Transverse colon (tissue), 4 donors: ENCODE measurements at regions of chr6 and their contacts with region 1.

Region 1: DNA sequence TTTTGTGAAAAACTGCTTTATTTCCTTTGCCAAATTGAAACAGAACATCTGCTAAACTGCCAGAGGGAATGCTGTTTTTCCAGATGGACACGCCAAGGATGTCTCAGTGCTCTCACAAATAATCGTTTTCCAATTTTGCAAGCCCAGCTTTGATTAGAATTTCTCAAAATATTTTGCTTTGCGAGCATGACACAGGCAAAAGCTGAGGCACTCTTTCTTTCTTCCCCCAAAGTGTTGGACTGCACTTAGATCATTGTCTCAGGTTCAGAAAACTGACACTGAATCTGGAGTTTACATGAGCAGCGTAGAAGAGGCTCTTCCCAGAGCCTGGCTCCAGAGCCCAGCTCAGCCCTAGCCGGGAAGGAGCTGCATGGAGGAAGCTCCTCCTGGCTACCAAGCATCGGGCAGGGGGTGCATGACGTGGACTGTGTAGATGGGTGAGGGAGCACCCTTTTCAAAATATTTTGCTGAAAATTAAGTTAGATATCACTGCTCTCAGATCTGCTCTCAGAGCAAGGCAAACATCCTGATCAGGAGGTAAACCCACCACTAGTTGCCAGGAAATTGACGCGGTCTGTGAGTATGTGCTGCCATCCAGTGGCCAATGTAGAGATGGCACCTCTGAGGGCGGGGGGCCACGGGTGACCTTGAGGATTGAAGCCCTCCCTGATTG is 107.5 kb downstream of the SLC22A3 start:
- DNase-seq: peak; percentile 64
- H3K4me3 ChIP-seq: peak overlapping the region in 1 of 4 donors; percentile 31
- H3K27ac ChIP-seq: peak overlapping the region; percentile 54 to 73 (median 66)
- H3K4me1 ChIP-seq: peaks cover 3 to 21% (median 10%) of the 10 kb centered on the region in 4 donors
- H3K27me3 ChIP-seq: no peaks in the 10 kb centered on the region
- CTCF ChIP-seq: peak; percentile 96 to 99 (median 98)
- EP300 ChIP-seq: no peak
- POLR2A ChIP-seq: no peak

Region 2: DNA sequence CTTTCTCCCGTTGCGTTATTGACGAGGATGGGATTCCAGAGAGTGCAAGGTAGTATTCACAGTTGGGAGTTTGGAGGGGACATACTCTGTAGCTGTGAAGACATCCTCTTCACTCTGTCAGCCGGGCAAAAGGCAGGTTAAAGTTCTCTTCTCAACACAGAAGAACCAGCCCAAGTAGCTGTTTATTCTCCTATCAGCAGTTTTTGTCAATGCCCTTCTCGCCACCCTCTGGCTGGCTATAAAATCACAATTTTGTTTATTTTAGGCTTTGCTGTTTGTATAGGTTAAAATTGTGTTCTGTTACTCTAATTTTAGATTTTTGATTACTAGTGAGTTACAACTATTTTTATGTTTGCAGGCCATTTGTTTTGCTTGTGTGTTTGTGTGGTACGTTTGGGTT is 602.8 kb before region 1 on chr6:
- in situ Hi-C with region 1: loop called in 3 of 4 experiments (anchors 25 kb)
- intact Hi-C with region 1: no loop called
- DNase-seq: no peak
- H3K4me3 ChIP-seq: no peak overlapping the region
- H3K27ac ChIP-seq: no peak overlapping the region
- H3K4me1 ChIP-seq: peaks cover 0 to 5% (median 0%) of the 10 kb centered on the region in 4 donors
- H3K27me3 ChIP-seq: peaks cover 3% of the 10 kb centered on the region
- CTCF ChIP-seq: peak in 2 of 5 experiments; percentile 13 to 20
- EP300 ChIP-seq: no peak
- POLR2A ChIP-seq: no peak

Region 3: GRCh38 chr6:159862103-159862502 is 593.6 kb before region 1 on chr6:
- in situ Hi-C with region 1: loop called (anchors 10 to 25 kb)
- intact Hi-C with region 1: no loop called
- DNase-seq: no peak
- H3K4me3 ChIP-seq: no peak overlapping the region
- H3K27ac ChIP-seq: no peak overlapping the region
- H3K4me1 ChIP-seq: no peaks in the 10 kb centered on the region
- H3K27me3 ChIP-seq: peaks cover 16% of the 10 kb centered on the region
- CTCF ChIP-seq: no peak
- EP300 ChIP-seq: no peak
- POLR2A ChIP-seq: no peak

Region 4: DNA sequence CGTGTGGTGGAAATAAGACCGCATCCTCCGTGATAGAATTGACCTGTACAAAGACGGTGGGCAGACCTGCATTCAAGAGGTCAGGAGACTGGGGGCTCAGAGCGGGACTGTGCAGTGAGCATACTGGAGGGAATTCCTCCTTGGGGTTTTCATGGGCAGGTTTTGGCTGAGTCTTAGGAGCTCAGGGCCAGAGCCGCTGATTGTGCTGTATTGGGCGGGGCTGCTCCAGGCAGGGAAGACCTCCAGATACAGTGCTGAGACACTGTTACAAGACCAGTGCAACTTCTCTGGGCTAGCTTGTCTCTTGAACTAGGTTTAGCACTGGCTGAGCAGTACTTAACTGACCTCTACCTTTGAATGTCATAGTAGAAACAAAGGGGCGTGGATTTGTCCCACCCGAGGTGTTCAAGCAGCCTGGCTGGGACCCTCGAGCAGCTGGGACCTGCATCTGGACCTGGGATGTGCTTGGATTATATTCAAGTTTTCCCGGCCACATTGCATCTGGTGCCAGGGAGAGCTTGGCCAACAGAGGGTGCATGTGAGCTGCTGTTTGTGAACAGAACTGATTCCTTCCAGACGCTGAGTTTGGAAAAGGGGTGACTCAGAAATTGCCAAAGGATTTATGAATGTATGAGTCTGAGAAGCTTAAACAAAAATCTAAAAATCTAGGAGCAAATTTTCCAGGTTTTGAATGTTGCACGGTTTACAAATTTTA is 367.5 kb before region 1 on chr6:
- in situ Hi-C with region 1: loop called in 1 of 4 experiments (anchors 10 kb)
- intact Hi-C with region 1: loop called (anchors 5 kb)
- DNase-seq: peak; percentile 74
- H3K4me3 ChIP-seq: no peak overlapping the region
- H3K27ac ChIP-seq: peak overlapping the region in 3 of 4 donors; percentile 60 to 82 (median 75)
- H3K4me1 ChIP-seq: peaks cover 6 to 29% (median 20%) of the 10 kb centered on the region in 4 donors
- H3K27me3 ChIP-seq: no peaks in the 10 kb centered on the region
- CTCF ChIP-seq: peak; percentile 64 to 79 (median 74)
- EP300 ChIP-seq: no peak
- POLR2A ChIP-seq: no peak

Region 5: GRCh38 chr6:160137989-160138835 is 317.5 kb before region 1 on chr6:
- in situ Hi-C with region 1: loop called in 3 of 4 experiments (anchors 5 to 10 kb)
- intact Hi-C with region 1: loop called (anchors 5 kb)
- DNase-seq: peak; percentile 65
- H3K4me3 ChIP-seq: no peak overlapping the region
- H3K27ac ChIP-seq: peak overlapping the region in 3 of 4 donors; percentile 46 to 75 (median 64)
- H3K4me1 ChIP-seq: peaks cover 17 to 21% (median 19%) of the 10 kb centered on the region in 4 donors
- H3K27me3 ChIP-seq: no peaks in the 10 kb centered on the region
- CTCF ChIP-seq: peak; percentile 70 to 88 (median 76)
- EP300 ChIP-seq: no peak
- POLR2A ChIP-seq: no peak

Region 6: GRCh38 chr6:160510199-160510598 is 54.5 kb after region 1 on chr6:
- in situ Hi-C with region 1: no loop called
- intact Hi-C with region 1: no loop called
- DNase-seq: no peak
- H3K4me3 ChIP-seq: no peak overlapping the region
- H3K27ac ChIP-seq: no peak overlapping the region
- H3K4me1 ChIP-seq: no peaks in the 10 kb centered on the region
- H3K27me3 ChIP-seq: no peaks in the 10 kb centered on the region
- CTCF ChIP-seq: no peak
- EP300 ChIP-seq: no peak
- POLR2A ChIP-seq: no peak

Region 7: DNA sequence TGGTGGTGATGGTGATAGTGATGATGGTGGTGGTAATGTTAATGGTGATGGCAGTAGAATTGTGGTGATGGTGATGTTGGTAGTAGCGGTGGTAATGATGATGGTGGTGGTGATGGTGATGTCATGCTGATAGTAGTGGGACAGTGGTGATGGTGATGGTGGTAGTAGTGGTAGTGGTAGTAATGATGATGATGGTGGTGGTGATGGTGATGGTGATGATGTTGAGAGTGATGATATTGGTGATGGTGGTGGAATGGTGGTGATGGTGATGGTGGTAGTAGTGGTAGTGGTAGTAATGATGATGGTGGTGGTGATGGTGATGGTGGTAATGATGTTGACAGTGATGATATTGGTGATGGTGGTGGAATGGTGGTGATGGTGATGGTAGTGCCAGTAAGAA is 79.6 kb after region 1 on chr6:
- in situ Hi-C with region 1: loop called in 1 of 4 experiments (anchors 5 kb)
- intact Hi-C with region 1: no loop called
- DNase-seq: no peak
- H3K4me3 ChIP-seq: no peak overlapping the region
- H3K27ac ChIP-seq: no peak overlapping the region
- H3K4me1 ChIP-seq: peaks cover 0 to 5% (median 0%) of the 10 kb centered on the region in 4 donors
- H3K27me3 ChIP-seq: no peaks in the 10 kb centered on the region
- CTCF ChIP-seq: no peak
- EP300 ChIP-seq: no peak
- POLR2A ChIP-seq: no peak